Left ventricle myocardium superior (tissue), 1 donor: ENCODE measurements at regions of chrX and their contacts with region 1.

Region 1: DNA sequence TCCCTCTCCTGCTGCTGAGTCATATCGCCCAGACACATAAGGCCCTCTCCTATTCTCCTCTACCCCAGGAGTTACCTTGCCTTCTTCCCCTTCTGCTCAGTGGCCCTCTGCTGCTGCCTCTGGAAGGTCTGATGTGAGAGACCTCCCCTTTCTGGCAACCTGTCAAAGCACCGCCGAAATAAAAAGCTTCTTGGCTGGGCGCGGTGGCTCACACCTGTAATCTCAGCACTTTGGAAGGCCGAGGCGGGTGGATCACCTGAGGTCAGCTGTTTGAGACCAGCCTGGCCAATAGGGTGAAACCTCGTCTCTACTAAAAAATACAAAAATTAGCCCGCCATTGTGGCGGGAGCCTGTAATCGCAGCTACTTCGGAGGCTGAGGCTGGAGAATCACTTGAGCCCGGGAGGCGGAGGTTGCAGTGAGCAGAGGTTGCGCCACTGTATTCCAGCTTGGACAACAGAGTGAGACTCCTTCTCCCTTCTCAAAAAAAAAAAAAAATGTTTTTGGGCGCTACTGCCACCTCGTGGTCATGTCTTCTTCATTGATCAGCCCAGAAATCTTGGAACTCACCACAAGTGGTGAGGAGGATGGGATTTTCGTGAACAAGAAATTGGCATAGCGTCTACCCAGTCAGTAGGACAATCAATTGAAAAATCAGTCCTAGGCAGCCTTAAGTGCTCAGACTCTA is 8.6 kb upstream of the ZXDA start:
- DNase-seq: peak; percentile 26
- ATAC-seq: peak; percentile 60

Region 2: DNA sequence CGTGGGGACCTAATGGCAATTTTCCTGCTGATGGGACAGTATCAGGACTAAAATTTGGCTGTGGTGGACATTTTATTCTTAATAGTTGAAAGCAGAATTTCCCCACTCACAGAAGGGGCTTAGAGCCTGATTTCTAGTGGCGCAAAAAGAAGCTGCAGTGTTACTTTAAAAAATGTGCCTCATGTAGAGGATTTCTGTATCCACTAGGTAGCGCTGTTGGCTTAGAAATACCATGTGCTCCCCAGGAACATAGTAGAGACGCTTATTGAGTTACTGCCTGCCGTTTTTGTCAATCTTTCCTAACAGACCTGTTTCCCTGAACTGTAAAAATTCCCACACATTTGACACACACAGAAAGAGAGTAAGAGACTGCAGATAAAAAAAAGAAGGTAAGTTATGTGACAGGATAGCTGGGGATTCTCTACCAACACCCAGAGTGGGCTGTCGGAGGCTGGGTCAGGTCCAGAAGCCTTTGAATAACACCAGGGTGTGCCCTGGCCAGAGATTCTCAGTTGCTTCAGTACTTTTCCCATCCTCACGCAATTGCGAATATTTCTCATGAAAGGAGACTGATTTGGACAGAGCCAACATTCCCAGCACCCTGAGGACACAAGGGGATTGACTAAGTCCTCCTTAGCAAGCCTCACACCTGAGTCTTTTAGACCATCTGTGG is 97.1 kb before region 1 on chrX:
- intact Hi-C with region 1: loop called (anchors 5 kb)
- DNase-seq: no peak
- ATAC-seq: peak; percentile 84

Region 3: GRCh38 chrX:57977992-57978391 is 59.1 kb after region 1 on chrX:
- intact Hi-C with region 1: no loop called
- DNase-seq: no peak
- ATAC-seq: no peak